Endothelial cell of umbilical vein (primary cell): ENCODE measurements at regions of chr6 and their contacts with region 1.

Region 1: GRCh38 chr6:88870717-88871330 is 92.6 kb downstream of the RNGTT start:
- DNase-seq: peak; percentile 69
- H3K4me3 ChIP-seq: no peak overlapping the region
- H3K27ac ChIP-seq: no peak overlapping the region
- H3K4me1 ChIP-seq: peaks cover 18% of the 10 kb centered on the region
- H3K27me3 ChIP-seq: no peaks in the 10 kb centered on the region
- CTCF ChIP-seq: peak; percentile 25 to 34
- POLR2A ChIP-seq: no peak

Region 2: GRCh38 chr6:87393022-87393622 is 1477.7 kb before region 1 on chr6:
- CTCF ChIA-PET with region 1: interaction called, 26 read pairs
- POLR2A ChIA-PET with region 1: no interaction called
- dilution Hi-C with region 1: no loop called
- intact Hi-C with region 1: loop called (anchors 5 kb)
- DNase-seq: peak; percentile 73
- H3K4me3 ChIP-seq: no peak overlapping the region
- H3K27ac ChIP-seq: no peak overlapping the region
- H3K4me1 ChIP-seq: no peaks in the 10 kb centered on the region
- H3K27me3 ChIP-seq: no peaks in the 10 kb centered on the region
- CTCF ChIP-seq: peak; percentile 32 to 39
- POLR2A ChIP-seq: no peak

Region 3: GRCh38 chr6:87832025-87832825 is 1038.6 kb before region 1 on chr6:
- CTCF ChIA-PET with region 1: interaction called, 39 read pairs
- POLR2A ChIA-PET with region 1: no interaction called
- dilution Hi-C with region 1: no loop called
- intact Hi-C with region 1: loop called (anchors 2 kb)
- DNase-seq: peak; percentile 64
- H3K4me3 ChIP-seq: peak overlapping the region; percentile 30 to 59 (median 33)
- H3K27ac ChIP-seq: no peak overlapping the region
- H3K4me1 ChIP-seq: no peaks in the 10 kb centered on the region
- H3K27me3 ChIP-seq: peaks cover 0 to 2% of the 10 kb centered on the region in 2 experiments
- CTCF ChIP-seq: peak; percentile 17 to 23
- POLR2A ChIP-seq: no peak

Region 4: DNA sequence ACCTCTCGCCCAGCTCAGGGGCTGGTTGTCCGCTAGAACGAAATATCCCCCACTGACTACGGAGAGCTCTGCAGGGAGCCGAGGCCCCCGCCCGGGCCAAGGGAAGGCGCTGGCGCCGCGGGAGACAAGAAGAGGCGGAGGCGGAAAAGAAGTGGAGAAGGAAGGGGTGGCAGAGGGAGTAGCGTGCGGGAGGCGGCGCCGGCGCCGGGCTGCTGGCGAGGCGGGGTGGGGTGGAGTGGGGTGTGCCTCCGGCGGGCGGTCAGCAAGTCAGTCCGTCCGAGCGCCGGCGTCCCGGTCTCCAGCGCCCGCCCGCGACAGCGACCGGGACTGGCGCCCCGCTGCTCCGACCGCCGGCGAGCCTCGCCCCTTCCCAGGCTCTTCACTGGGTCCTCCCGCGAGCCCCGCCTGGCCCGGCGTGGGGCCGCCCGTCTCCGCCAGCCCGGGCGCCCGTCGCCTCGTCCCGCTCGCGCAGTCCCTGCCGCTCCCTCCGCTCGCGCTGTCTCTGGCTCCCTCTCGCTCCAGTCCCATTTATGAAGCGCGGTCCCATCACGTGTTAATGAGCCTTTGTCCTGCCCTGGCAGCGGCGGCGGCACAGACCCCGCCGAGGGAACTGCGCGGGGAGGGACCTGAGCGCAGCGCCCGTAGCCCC is 704.9 kb before region 1 on chr6 and contains the start of gene CNR1:
- CTCF ChIA-PET with region 1: no interaction called
- POLR2A ChIA-PET with region 1: no interaction called
- dilution Hi-C with region 1: no loop called
- intact Hi-C with region 1: loop called (anchors 10 kb)
- DNase-seq: peak; percentile 24
- H3K4me3 ChIP-seq: peak within 1 kb of the TSS; percentile 29 to 58 (median 42)
- H3K27ac ChIP-seq: no peak within 1 kb of the TSS
- H3K4me1 ChIP-seq: peaks cover 12% of the 10 kb centered on the region
- H3K27me3 ChIP-seq: peaks cover 40 to 57% of the 10 kb centered on the region in 2 experiments
- CTCF ChIP-seq: no peak
- POLR2A ChIP-seq: no peak
- total RNA-seq, gene CNR1: not detected in 2 replicates

Region 5: GRCh38 chr6:88780714-88781389 is 90.0 kb before region 1 on chr6:
- CTCF ChIA-PET with region 1: interaction called, 23 read pairs
- POLR2A ChIA-PET with region 1: no interaction called
- dilution Hi-C with region 1: no loop called
- intact Hi-C with region 1: loop called (anchors 2 kb)
- DNase-seq: peak; percentile 67
- H3K4me3 ChIP-seq: no peak overlapping the region
- H3K27ac ChIP-seq: no peak overlapping the region
- H3K4me1 ChIP-seq: no peaks in the 10 kb centered on the region
- H3K27me3 ChIP-seq: no peaks in the 10 kb centered on the region
- CTCF ChIP-seq: peak; percentile 76 to 88
- POLR2A ChIP-seq: no peak

Region 6: DNA sequence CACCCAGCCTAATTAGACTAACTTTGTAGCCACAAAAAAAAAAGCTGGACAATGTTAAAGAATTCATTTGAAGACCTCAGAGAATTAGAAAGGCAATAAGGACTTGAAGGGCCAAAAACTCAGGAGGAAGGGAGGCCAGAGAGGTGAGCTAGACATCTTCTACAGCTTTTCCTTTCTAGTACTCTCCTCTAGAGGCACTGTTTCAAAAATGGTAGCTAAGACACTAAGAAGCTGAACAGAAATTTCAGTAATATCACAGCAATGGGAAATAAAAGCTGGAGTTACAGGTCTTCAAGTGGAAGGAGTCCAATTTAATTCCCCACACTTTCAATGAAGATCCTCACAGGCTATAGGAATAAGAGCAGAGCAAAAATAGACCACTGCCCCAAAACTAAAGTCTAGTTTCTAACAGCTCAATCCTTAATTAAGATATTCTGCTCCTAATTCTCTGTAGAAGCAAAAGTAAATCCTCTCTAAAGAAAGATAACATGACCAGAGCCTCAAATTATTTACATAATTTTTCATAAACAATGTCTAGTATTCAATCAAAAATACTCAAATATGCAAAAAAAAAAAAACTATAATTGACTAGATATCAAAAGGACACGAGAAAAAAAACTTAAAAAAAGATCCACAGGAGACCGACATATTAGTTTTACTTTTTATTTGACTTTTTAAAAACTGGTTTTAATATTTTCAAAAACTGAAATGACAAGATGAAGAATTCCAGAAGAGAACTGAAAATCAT is 28.9 kb after region 1 on chr6:
- CTCF ChIA-PET with region 1: interaction called, 12 read pairs
- POLR2A ChIA-PET with region 1: no interaction called
- dilution Hi-C with region 1: no loop called
- intact Hi-C with region 1: no loop called
- DNase-seq: no peak
- H3K4me3 ChIP-seq: no peak overlapping the region
- H3K27ac ChIP-seq: no peak overlapping the region
- H3K4me1 ChIP-seq: no peaks in the 10 kb centered on the region
- H3K27me3 ChIP-seq: no peaks in the 10 kb centered on the region
- CTCF ChIP-seq: peak in 1 of 2 donors; percentile 12
- POLR2A ChIP-seq: no peak